Testis (tissue), 5 donors: ENCODE measurements at regions of chr19 and their contacts with region 1.

Region 1: GRCh38 chr19:47436712-47437401 is 17.5 kb upstream of the MEIS3 start:
- DNase-seq: peak; percentile 87
- H3K4me3 ChIP-seq: no peak overlapping the region
- H3K27ac ChIP-seq: no peak overlapping the region
- H3K4me1 ChIP-seq: no peaks in the 10 kb centered on the region
- H3K27me3 ChIP-seq: no peaks in the 10 kb centered on the region
- CTCF ChIP-seq: peak; percentile 74 to 89 (median 76)
- POLR2A ChIP-seq: no peak

Region 2: DNA sequence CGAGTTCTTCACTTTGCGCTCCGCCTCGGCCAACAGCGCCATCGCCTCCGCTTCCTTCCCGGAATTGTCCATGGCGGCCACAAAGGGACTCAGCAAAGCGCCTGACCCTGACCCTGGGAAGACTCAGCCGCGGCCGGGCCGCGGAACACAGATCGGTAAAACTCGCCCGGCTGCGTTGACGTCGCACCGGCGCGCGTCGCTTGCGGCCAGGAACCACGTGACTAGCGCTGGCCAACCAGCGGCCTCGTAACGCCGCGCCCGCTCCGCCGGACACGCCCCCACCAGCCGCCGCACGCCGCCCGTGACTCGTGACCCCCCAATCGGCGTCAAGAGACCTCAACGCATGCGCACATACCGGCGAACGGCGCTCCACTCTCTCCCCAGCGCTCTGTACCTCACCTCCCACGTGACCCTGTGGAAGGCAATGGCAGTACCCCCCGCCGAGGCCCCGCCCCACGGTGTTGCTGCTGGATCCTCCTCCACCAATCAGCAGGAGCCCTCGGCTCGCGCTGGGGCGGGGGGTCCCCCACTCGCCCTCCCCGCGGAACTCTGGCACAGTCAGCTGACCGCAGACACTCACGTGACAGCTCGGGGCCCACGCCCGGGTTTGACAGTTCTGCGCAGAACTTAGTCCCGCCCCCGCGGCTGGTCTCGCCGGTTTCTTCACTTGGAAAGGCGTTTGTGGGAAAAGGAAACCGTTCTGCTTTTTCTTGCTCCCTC is 78.2 kb after region 1 on chr19 and contains the start of gene NAPA:
- intact Hi-C with region 1: loop called (anchors 10 kb)
- DNase-seq: peak; percentile 100
- H3K4me3 ChIP-seq: peak within 1 kb of the TSS; percentile 91 to 95
- H3K27ac ChIP-seq: peak within 1 kb of the TSS; percentile 95
- H3K4me1 ChIP-seq: peaks cover 35% of the 10 kb centered on the region
- H3K27me3 ChIP-seq: no peaks in the 10 kb centered on the region
- CTCF ChIP-seq: no peak
- POLR2A ChIP-seq: peak; percentile 79
- total RNA-seq, gene NAPA: 227 to 257 TPM

Region 3: GRCh38 chr19:47531640-47532387 is 95.0 kb after region 1 on chr19:
- intact Hi-C with region 1: no loop called
- DNase-seq: peak; percentile 71
- H3K4me3 ChIP-seq: no peak overlapping the region
- H3K27ac ChIP-seq: no peak overlapping the region
- H3K4me1 ChIP-seq: peaks cover 11% of the 10 kb centered on the region
- H3K27me3 ChIP-seq: no peaks in the 10 kb centered on the region
- CTCF ChIP-seq: no peak
- POLR2A ChIP-seq: no peak

Region 4: GRCh38 chr19:47697863-47698609 is 261.2 kb after region 1 on chr19:
- intact Hi-C with region 1: loop called (anchors 5 kb)
- DNase-seq: peak; percentile 87
- H3K4me3 ChIP-seq: no peak overlapping the region
- H3K27ac ChIP-seq: no peak overlapping the region
- H3K4me1 ChIP-seq: peaks cover 5% of the 10 kb centered on the region
- H3K27me3 ChIP-seq: no peaks in the 10 kb centered on the region
- CTCF ChIP-seq: peak; percentile 87 to 97 (median 95)
- POLR2A ChIP-seq: no peak